Aorta (tissue), 5 donors: ENCODE measurements at regions of chr21 and their contacts with region 1.

Region 1: DNA sequence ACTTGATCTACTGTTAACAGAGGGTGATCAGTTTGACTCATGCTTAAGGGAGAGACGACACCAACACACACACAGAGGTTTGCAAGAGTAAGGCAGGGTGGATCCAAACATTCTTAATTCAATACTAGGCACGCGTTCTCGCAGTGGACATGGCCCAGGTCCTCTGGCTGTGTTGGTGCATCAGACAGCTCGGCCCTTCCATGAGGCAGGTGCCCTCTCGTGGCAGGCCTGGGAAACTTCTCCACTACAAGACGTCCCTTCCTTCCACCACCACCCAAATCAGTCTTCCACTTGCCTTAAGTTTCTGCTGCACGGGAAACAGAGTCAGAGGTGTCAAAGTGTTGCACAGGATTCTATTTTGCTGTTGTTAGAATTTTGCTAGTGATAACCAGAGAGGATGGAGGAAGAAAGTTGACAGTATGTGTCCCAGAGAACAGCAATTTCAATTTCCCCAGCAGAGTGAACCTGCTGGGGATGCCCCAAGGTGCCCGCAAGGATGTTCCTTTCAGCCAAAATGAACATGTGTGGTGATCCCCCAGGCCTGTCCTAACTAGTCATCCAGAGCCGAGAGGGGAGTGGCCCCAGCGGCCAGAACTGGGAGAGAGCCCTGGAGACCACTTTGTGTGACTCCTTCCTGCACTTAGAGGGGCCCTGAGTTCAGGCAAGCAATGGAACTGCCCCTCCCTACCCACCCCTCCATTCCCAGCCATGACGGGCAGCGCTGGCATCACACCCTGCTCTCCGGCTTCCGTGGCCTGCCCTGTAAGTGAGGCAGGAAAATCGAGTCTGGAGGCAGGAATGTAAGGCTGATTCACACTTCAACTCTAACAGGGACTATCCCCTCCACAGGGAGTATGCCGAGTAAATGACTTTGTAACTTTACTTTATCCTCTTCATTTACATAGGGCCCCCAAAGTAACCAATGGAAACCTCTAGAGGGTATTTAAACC is 34.8 kb downstream of the MX1 start:
- DNase-seq: peak; percentile 85 to 91
- ATAC-seq: peak; percentile 91
- H3K4me3 ChIP-seq: no peak overlapping the region
- H3K27ac ChIP-seq: no peak overlapping the region
- H3K4me1 ChIP-seq: no peaks in the 10 kb centered on the region
- H3K27me3 ChIP-seq: no peaks in the 10 kb centered on the region

Region 2: DNA sequence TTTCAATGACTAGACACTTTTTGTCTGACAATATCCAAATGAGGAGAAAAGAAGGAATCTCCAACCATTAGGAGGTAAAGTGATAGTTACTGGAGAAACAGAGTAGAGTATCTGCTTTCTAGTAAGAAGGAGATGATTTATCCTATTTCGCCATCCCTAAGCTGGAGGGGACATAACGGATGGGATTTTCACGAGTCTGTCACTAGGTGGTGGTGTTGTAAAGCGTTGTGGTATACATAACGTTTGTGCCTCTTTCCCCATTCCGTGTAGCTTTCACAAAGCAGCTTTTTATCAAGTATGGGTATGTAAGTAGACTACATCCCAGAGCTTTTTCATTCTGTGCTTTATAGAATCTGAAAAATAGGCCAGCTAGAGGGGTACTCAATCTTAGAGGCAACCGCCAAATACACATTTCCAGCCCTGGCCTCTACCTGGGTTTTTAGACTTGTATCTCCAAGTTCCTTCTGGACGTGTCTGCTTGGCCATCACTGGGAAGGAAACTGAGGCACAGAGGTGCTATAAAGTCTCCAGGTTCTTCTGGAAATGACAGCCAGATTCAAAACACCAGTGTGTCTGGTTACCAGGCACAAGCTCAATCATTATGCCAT is 177.5 kb before region 1 on chr21:
- intact Hi-C with region 1: loop called (anchors 2 to 5 kb)
- DNase-seq: no peak
- ATAC-seq: peak; percentile 90
- H3K4me3 ChIP-seq: no peak overlapping the region
- H3K27ac ChIP-seq: no peak overlapping the region
- H3K4me1 ChIP-seq: no peaks in the 10 kb centered on the region
- H3K27me3 ChIP-seq: no peaks in the 10 kb centered on the region

Region 3: DNA sequence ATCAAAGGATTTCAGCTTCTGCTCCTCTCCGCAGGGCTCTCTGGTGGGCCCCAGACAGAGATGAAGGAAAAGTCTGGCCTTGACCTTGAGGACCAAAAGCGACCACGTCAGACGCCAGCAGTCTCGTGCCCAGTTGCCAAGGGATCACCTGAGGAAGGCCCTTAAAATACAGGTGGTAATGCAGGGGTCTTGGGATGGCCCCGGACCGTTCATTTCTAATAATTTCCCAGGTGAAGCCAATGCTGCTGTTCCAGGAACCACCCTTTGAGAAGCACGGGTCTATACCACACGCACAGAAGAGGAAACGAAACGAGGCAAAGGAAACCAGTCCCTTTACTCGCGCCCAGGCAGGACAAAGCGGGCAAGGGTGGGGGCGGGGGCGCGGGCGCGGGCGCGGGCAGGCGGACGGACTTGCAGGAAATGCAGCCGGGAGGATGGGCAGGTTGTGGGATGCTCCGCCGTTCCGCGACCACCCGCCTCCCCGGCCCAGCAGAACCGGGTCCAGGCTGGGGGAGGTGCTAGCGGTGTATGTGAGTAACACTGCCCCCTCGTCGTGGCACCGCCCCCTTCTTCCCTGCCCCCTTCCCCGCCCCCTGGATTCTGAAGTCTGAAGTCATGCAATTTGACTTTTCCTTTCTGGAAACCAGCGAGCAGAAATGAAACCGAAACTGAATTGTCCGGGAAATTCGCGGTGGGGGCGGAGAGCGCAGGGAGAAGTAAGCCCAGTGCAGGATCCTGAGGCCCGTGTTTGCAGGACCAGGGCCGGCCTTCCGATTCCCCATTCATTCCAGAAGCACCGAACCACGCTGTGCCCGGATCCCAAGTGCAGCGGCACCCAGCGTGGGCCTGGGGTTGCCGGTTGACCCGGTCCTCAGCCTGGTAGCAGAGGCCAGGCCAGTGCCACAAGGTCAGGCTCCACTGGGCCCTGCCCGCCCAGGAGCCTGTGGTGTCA is 40.7 kb before region 1 on chr21:
- intact Hi-C with region 1: no loop called
- DNase-seq: peak; percentile 91 to 94
- ATAC-seq: peak; percentile 94
- H3K4me3 ChIP-seq: peak overlapping the region; percentile 15 to 57
- H3K27ac ChIP-seq: peak overlapping the region in 1 of 2 donors; percentile 61
- H3K4me1 ChIP-seq: no peaks in the 10 kb centered on the region
- H3K27me3 ChIP-seq: no peaks in the 10 kb centered on the region